Activated T-helper 1 cell treated with anti-CD3 and anti-CD28 coated beads, Interleukin-12 subunit alpha, Interleukin-12 subunit beta, Interleukin-2, Interleukin-4 antibody, amounts not matched to agents 30 ng/mL and 10 ng/mL and 1 ng/mL, durations not matched to agents 14 hours and 24 hours and 36 hours (primary cell): ENCODE measurements at regions of chr2 and their contacts with region 1.

Region 1: DNA sequence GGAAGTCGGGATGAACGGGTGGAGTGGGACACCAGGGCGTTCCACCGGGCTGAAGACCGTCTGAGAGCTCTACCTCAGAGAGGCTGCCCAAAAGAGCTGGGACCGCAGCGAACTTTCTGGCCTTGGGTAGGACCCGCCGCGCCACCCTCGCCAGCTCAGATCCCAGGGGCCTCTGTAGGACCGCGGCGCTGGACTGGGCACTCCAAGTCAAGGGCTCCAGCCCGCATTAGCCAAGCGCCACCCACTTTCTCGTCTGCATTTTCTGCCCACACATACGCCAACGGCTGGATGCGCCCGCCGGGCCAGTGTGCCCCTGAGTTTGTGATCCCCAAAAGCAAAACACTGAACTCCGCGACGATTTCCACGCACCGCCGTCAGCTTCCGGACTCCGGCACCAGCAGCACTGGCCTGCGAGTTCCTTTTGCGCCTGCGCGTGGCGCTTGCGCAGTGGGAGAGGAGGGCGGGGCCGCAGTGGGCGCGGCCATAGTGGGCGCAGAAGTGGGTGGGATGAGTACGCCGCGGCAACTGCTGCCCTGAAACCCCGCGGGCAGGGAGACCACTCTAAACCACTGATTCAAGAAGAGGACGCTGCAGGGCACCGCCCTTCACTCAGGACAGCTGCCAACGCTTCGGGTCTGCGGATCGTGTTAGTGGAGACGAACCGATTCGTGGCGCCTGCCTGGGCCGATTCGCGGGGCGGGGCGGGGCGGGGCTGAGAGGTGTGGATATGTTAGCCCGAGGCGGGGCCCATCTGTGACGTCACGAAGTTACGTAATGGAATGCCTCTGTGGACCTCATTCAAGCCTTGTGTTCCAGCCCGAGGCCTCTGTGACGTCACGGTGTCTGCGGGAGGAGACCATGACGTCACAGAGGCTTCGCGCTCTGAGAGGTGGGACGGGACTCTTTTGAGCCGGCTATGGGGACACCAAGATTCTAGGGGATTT is 10.5 kb downstream of the OSR1 start:
- DNase-seq: peak; percentile 98
- H3K4me3 Mint-ChIP-seq: peak overlapping the region; percentile 95
- H3K27ac Mint-ChIP-seq: peak overlapping the region; percentile 96
- H3K4me1 Mint-ChIP-seq: peaks cover 24% of the 10 kb centered on the region
- H3K27me3 Mint-ChIP-seq: peaks cover 36% of the 10 kb centered on the region

Region 2: GRCh38 chr2:17753803-17754663 is 1593.9 kb before region 1 on chr2 and contains the starts of genes GEN1 and SMC6:
- intact Hi-C with region 1: loop called (anchors 5 kb)
- DNase-seq: peak; percentile 86
- H3K4me3 Mint-ChIP-seq: peak within 1 kb of the TSS; percentile 86
- H3K27ac Mint-ChIP-seq: peak within 1 kb of the TSS; percentile 78
- H3K4me1 Mint-ChIP-seq: peaks cover 69% of the 10 kb centered on the region
- H3K27me3 Mint-ChIP-seq: no peaks in the 10 kb centered on the region
- total RNA-seq, gene GEN1: 28.1 and 31.8 TPM in 2 replicates
- total RNA-seq, gene SMC6: 27.8 and 31.0 TPM in 2 replicates

Region 3: GRCh38 chr2:19362755-19363473 is 15.0 kb after region 1 on chr2:
- intact Hi-C with region 1: loop called (anchors 1 kb)
- DNase-seq: no peak
- H3K4me3 Mint-ChIP-seq: peak overlapping the region; percentile 90
- H3K27ac Mint-ChIP-seq: no peak overlapping the region
- H3K4me1 Mint-ChIP-seq: peaks cover 24% of the 10 kb centered on the region
- H3K27me3 Mint-ChIP-seq: peaks cover 94% of the 10 kb centered on the region

Region 4: DNA sequence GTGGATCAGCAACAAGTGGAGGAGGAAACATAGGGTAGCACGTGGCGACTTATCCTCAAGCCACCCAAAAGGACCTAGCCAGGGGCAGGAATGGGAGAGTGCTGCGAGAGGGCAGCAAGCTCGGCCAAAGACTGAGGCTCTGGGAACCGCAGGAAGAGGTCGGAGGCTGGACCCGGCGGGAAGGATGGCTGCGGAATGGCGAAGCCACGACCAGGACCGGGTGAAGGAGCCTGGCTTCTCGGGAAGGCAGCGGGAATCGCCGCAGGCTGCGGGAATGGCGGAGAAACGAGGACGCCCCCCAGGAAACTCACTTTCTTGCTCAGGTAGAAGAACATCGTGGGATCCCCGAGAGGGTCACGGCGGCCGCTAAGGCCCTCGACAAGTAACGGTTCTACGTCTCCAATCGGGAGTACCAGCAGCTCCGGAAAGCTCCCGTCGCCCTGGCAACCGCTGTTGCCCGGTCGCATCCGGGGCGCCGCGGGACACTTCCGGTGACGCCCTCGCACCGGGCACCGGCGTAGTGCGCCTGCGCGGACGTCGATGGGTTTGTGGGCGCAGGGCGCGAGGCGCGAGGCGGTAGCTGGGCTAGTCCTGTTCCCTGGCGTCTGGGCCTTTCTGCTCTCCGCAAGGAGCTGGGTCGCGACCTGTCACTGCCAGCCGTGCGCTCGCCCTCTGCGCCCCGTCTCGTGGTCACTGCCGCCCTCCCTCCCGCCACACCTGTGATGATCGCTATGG is 642.0 kb after region 1 on chr2 and contains the start of gene WDR35:
- intact Hi-C with region 1: loop called (anchors 5 kb)
- DNase-seq: peak; percentile 92
- H3K4me3 Mint-ChIP-seq: peak within 1 kb of the TSS; percentile 90
- H3K27ac Mint-ChIP-seq: peak within 1 kb of the TSS; percentile 69
- H3K4me1 Mint-ChIP-seq: peaks cover 19% of the 10 kb centered on the region
- H3K27me3 Mint-ChIP-seq: peaks cover 30% of the 10 kb centered on the region
- total RNA-seq, gene WDR35: 7.7 and 7.8 TPM in 2 replicates

Region 5: DNA sequence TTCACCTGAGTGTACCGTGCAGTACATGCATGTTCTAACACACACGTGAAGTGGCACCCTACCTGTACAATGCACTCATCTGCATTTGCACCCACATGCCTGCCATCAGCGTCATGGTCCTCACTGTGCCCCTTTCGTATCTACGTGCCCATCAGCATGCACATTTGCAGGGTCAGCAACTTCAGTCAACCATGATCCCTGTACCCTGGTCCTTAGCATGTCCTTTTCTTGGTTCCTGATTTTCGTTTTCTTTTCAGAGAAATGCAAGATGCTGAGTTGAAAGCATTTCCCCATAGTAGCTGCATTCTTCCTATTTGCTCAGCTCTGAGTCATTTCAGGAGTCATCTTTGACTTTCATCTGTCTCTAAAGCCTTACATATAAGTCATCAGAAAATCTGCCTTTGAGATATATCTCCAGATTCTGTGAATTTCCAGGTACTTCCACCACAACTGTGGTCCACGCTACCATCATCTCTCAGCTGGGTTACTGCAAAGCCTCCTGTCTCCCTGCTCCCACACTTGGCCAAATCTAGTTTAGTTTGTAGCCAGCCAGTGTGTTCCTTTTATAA is 1017.4 kb after region 1 on chr2:
- intact Hi-C with region 1: loop called (anchors 5 kb)
- DNase-seq: peak; percentile 67
- H3K4me3 Mint-ChIP-seq: peak overlapping the region; percentile 2
- H3K27ac Mint-ChIP-seq: peak overlapping the region; percentile 77
- H3K4me1 Mint-ChIP-seq: peaks cover 37% of the 10 kb centered on the region
- H3K27me3 Mint-ChIP-seq: no peaks in the 10 kb centered on the region